ENCODE measurements at regions of chr20 and their contacts with region 1.

Region 1: DNA sequence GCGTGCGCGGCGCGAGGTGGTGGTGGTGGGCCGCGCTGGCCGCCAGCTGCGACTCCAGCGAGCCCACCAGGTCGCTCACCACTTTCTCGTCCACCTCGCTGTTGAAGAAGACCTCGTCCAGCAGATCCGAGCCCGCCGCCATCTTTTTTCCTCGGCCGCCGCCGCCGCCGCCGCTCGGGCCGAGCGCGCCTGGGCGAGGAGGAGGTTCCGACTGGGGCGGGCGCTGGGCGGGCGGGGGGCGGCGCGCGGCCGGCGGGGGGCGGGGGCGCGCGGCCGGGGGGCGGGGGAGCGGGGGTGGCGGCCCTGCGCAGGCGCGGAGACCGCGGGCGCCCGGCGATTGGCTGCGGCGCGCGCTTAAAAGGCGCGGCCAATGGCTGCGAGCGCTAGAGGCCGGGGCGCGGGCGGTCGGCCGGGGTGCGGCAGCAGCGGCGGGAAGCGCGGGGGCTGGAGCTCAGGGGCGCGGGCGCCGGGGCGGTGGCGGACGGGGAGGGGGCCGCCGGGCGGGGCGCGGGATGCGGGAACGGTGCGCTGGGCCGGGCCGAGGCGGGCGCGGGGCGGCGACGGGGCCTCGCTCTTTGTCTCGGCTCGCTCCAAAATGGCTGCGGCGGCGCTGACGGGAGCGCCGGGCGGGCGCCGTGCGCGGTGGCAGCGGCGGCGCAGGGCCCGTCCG is at the start of gene TAF4:
- DNase-seq: peak; percentile 68 to 94 (median 80)
- ATAC-seq: peak; percentile 68
- H3K4me3 ChIP-seq: peak within 1 kb of the TSS; percentile 52 to 62
- H3K27ac ChIP-seq: peak within 1 kb of the TSS; percentile 80 to 84
- H3K4me1 ChIP-seq: peaks cover 23 to 54% of the 10 kb centered on the region in 2 donors
- H3K27me3 ChIP-seq: no peaks in the 10 kb centered on the region
- CTCF ChIP-seq: no peak
- polyA plus RNA-seq, gene TAF4: 14.1 to 21.0 (median 18.4) TPM

Region 2: GRCh38 chr20:62121776-62122631 is 56.2 kb after region 1 on chr20 and contains the start of gene LSM14B:
- intact Hi-C with region 1: loop called in 1 of 2 experiments (anchors 10 kb)
- DNase-seq: peak; percentile 95 to 99 (median 98)
- ATAC-seq: peak; percentile 87
- H3K4me3 ChIP-seq: peak within 1 kb of the TSS; percentile 67 to 85
- H3K27ac ChIP-seq: peak within 1 kb of the TSS; percentile 83 to 95
- H3K4me1 ChIP-seq: peaks cover 8 to 23% of the 10 kb centered on the region in 2 donors
- H3K27me3 ChIP-seq: peaks cover 0 to 22% of the 10 kb centered on the region in 2 donors
- CTCF ChIP-seq: no peak
- polyA plus RNA-seq, gene LSM14B: 57.1 to 62.3 (median 59.9) TPM

Region 3: DNA sequence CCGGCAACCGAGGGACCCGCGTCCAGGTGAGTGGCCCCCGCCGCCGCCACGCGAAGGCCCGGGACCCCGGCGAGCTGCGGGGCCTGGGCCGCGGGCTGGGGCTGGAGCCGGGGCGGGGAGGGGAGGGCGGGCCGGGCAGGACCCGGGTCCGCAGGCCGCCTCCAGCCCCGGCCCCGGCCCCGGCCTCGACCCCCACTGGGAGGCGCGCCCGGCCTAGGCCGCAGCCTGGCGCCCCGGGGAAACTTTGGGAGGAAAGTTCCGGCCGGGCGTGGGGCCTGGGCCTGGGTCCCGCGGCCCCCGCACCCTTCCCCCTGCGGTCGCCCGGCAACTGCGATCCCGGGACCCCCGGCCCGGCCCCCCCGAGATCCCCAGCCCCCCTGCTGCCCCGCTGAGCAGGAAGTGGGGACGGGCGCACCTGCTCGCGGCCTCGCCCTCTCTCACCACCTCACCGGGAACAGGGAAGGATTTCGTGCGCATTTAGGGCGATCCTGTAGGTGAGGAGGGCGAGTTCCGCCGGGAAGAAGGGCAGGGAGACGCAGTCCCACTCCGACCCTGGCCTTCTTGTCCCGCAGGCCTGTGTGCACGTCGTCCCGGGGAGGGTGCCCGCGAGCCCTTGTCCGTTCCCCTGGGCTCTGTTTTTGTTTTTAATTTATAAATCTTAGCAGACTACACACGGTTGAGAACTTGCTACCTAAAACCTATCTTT is 172.9 kb after region 1 on chr20:
- intact Hi-C with region 1: no loop called
- DNase-seq: peak in 1 of 4 donors; percentile 78
- ATAC-seq: peak; percentile 6
- H3K4me3 ChIP-seq: peak overlapping the region; percentile 68 to 71
- H3K27ac ChIP-seq: peak overlapping the region; percentile 65 to 88
- H3K4me1 ChIP-seq: peaks cover 9 to 41% of the 10 kb centered on the region in 2 donors
- H3K27me3 ChIP-seq: peaks cover 0 to 2% of the 10 kb centered on the region in 2 donors
- CTCF ChIP-seq: no peak

Region 4: GRCh38 chr20:62320581-62321354 is 255.0 kb after region 1 on chr20:
- intact Hi-C with region 1: no loop called
- DNase-seq: no peak
- ATAC-seq: peak; percentile 20
- H3K4me3 ChIP-seq: no peak overlapping the region
- H3K27ac ChIP-seq: no peak overlapping the region
- H3K4me1 ChIP-seq: no peaks in the 10 kb centered on the region
- H3K27me3 ChIP-seq: no peaks in the 10 kb centered on the region
- CTCF ChIP-seq: no peak

Measured in left lung (tissue), 14 donors.